Calu3 (cell line): ENCODE measurements at regions of chr15 and their contacts with region 1.

Region 1: DNA sequence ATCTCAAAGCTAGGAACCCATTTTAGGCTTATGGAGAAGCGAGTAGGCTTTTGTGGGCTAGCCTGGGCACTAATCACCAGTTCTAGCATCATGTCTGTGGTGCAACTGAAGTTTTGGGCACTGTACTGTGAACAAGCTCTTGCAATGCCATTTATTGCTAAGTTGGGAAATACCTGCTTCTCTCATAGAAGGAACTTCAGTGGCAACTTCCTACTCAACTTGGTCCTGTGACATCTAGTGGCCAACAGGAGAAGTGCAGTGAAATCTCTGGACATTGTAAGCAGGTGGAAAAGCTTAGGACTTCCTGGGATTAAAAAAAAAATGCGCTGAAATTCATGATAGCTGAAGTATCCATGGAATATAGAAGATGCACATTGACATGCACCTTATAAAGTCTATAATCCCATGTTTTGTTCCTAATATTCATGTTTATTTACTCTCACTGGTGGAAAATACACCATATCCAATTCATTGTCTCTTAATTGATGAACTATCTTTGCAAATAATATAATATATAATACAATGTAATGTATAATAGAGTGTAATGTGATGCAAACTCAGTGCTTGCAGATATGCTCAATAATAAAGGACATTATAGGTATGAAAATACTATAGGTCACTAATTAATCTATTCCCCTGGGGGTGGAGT is 6.5 kb upstream of the ALDH1A3 start:
- DNase-seq: peak; percentile 81
- H3K4me3 Mint-ChIP-seq: no peak overlapping the region
- H3K27ac Mint-ChIP-seq: no peak overlapping the region
- H3K4me1 Mint-ChIP-seq: peaks cover 8% of the 10 kb centered on the region
- H3K27me3 Mint-ChIP-seq: no peaks in the 10 kb centered on the region
- CTCF ChIP-seq: peak; percentile 72

Region 2: GRCh38 chr15:100627789-100628395 is 245.3 kb before region 1 on chr15:
- CTCF ChIA-PET with region 1: interaction called, 5 read pairs
- intact Hi-C with region 1: loop called (anchors 1 kb)
- DNase-seq: peak; percentile 76
- H3K4me3 Mint-ChIP-seq: no peak overlapping the region
- H3K27ac Mint-ChIP-seq: no peak overlapping the region
- H3K4me1 Mint-ChIP-seq: peaks cover 14% of the 10 kb centered on the region
- H3K27me3 Mint-ChIP-seq: no peaks in the 10 kb centered on the region
- CTCF ChIP-seq: peak; percentile 61

Region 3: DNA sequence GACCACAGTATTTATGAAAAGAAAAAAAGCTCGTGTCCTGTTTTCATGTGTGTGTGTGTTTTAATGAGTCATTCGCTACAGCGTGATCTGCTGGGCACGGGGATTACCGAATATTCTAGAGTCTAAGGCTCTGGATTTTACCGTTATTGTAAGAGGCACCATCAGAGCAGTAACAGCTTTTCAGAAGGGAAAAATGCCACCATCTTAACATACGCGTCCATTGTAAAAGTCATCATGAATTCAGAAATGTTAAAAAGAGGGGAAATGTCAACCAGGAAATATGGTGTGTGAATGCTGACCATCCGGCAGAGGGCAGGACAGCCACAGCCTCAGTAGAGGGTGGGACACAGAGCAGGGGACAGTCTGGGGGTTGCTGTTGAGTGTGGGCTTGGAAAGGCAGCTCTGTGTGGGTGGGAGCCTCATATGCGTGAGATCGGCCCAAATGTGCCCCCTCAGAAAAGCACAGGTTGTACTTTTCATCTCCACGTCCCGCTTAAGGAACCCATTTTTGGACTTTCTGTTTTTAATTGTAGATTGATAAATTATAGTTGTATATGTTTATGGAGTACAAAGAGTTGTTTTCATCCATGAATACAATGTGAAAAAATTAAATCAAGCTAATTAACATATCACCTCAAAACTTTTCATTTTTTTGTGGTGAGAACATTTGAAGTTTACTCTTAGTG is 201.2 kb before region 1 on chr15:
- CTCF ChIA-PET with region 1: interaction called, 28 read pairs
- intact Hi-C with region 1: loop called (anchors 1 kb)
- DNase-seq: peak; percentile 78
- H3K4me3 Mint-ChIP-seq: peak overlapping the region; percentile 16
- H3K27ac Mint-ChIP-seq: peak overlapping the region; percentile 86
- H3K4me1 Mint-ChIP-seq: peaks cover 32% of the 10 kb centered on the region
- H3K27me3 Mint-ChIP-seq: no peaks in the 10 kb centered on the region
- CTCF ChIP-seq: peak; percentile 81

Region 4: DNA sequence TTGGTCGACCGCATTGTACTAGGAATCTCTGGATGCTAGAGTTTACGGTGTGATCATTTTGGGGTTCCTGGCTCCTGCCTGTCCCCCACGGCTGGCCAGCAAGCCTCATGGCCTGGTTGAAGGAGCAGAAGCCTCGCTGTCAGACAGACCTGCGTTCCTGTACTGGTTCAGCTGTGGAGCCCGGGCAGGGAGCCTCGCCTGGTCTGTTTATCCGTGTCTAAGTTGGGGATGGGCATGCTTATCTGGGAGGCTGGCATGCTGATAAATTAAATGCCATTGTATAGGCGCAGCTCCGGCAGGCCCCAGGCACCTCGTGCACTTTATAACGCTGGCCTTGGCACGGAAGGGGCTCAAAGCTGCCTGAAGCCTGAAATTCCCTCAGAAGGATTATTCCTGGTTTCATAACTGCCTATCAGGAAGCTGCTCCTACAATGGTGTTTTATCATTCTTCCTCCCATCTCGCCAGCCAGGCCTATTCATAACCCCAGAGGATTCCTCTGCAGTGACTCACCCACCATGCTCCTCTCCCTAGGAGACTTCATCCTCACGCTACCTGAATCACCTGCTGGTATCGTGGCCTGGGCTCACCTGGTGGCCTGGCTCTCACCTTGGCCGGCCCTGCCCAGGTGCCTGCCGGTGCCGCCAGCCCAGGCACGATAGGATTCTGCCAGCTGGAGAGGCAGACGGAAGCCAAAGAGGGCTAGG is 159.8 kb before region 1 on chr15:
- CTCF ChIA-PET with region 1: interaction called, 10 read pairs
- intact Hi-C with region 1: no loop called
- DNase-seq: peak; percentile 97
- H3K4me3 Mint-ChIP-seq: peak overlapping the region; percentile 45
- H3K27ac Mint-ChIP-seq: peak overlapping the region; percentile 98
- H3K4me1 Mint-ChIP-seq: peaks cover 85% of the 10 kb centered on the region
- H3K27me3 Mint-ChIP-seq: no peaks in the 10 kb centered on the region
- CTCF ChIP-seq: no peak

Region 5: GRCh38 chr15:100721770-100722550 is 151.2 kb before region 1 on chr15:
- CTCF ChIA-PET with region 1: interaction called, 5 read pairs
- intact Hi-C with region 1: loop called (anchors 2 kb)
- DNase-seq: peak; percentile 89
- H3K4me3 Mint-ChIP-seq: peak overlapping the region; percentile 48
- H3K27ac Mint-ChIP-seq: peak overlapping the region; percentile 97
- H3K4me1 Mint-ChIP-seq: peaks cover 78% of the 10 kb centered on the region
- H3K27me3 Mint-ChIP-seq: no peaks in the 10 kb centered on the region
- CTCF ChIP-seq: no peak

Region 6: GRCh38 chr15:100802421-100803170 is 70.6 kb before region 1 on chr15:
- CTCF ChIA-PET with region 1: no interaction called
- intact Hi-C with region 1: no loop called
- DNase-seq: no peak
- H3K4me3 Mint-ChIP-seq: no peak overlapping the region
- H3K27ac Mint-ChIP-seq: no peak overlapping the region
- H3K4me1 Mint-ChIP-seq: no peaks in the 10 kb centered on the region
- H3K27me3 Mint-ChIP-seq: no peaks in the 10 kb centered on the region
- CTCF ChIP-seq: no peak

Region 7: GRCh38 chr15:100849252-100850171 is 23.6 kb before region 1 on chr15:
- CTCF ChIA-PET with region 1: interaction called, 13 read pairs
- intact Hi-C with region 1: no loop called
- DNase-seq: peak; percentile 93
- H3K4me3 Mint-ChIP-seq: peak overlapping the region; percentile 93
- H3K27ac Mint-ChIP-seq: peak overlapping the region; percentile 90
- H3K4me1 Mint-ChIP-seq: peaks cover 28% of the 10 kb centered on the region
- H3K27me3 Mint-ChIP-seq: no peaks in the 10 kb centered on the region
- CTCF ChIP-seq: peak; percentile 73